Naive thymus-derived CD4-positive, alpha-beta T cell (primary cell): ENCODE measurements at regions of chr7 and their contacts with region 1.

Region 1: GRCh38 chr7:149028346-149029109 is at the start of gene PDIA4:
- DNase-seq: peak; percentile 97 to 100 (median 99)
- ATAC-seq: peak; percentile 92
- H3K4me3 ChIP-seq: peak within 1 kb of the TSS; percentile 65
- H3K4me3 Mint-ChIP-seq: peak within 1 kb of the TSS; percentile 82 to 95 (median 92)
- H3K27ac ChIP-seq: peak within 1 kb of the TSS; percentile 89
- H3K27ac Mint-ChIP-seq: peak within 1 kb of the TSS; percentile 89 to 96 (median 93)
- H3K4me1 ChIP-seq: peaks cover 16 to 17% of the 10 kb centered on the region in 2 donors
- H3K4me1 Mint-ChIP-seq: peaks cover 27 to 48% (median 41%) of the 10 kb centered on the region in 7 donors
- H3K27me3 ChIP-seq: no peaks in the 10 kb centered on the region
- H3K27me3 Mint-ChIP-seq: peaks cover 0 to 4% (median 0%) of the 10 kb centered on the region in 5 donors
- total RNA-seq, gene PDIA4: 38.2 to 157 (median 73.7) TPM

Region 2: GRCh38 chr7:148698397-148699023 is 330.0 kb before region 1 on chr7 and contains the start of gene CUL1:
- CTCF ChIA-PET with region 1: no interaction called
- POLR2A ChIA-PET with region 1: interaction called, 5 read pairs
- intact Hi-C with region 1: loop called (anchors 1 kb)
- DNase-seq: peak; percentile 74 to 85 (median 81)
- ATAC-seq: peak; percentile 89
- H3K4me3 ChIP-seq: peak within 1 kb of the TSS; percentile 80
- H3K4me3 Mint-ChIP-seq: peak within 1 kb of the TSS; percentile 85 to 99 (median 93)
- H3K27ac ChIP-seq: peak within 1 kb of the TSS; percentile 93
- H3K27ac Mint-ChIP-seq: peak within 1 kb of the TSS; percentile 87 to 99 (median 93)
- H3K4me1 ChIP-seq: peaks cover 27 to 29% of the 10 kb centered on the region in 2 donors
- H3K4me1 Mint-ChIP-seq: peaks cover 41 to 53% (median 52%) of the 10 kb centered on the region in 7 donors
- H3K27me3 ChIP-seq: no peaks in the 10 kb centered on the region
- H3K27me3 Mint-ChIP-seq: no peaks in the 10 kb centered on the region
- total RNA-seq, gene CUL1: 39.0 to 68.7 (median 53.6) TPM

Region 3: GRCh38 chr7:148987010-148987750 is 41.3 kb before region 1 on chr7:
- CTCF ChIA-PET with region 1: interaction called, 7 read pairs
- POLR2A ChIA-PET with region 1: interaction called, 6 read pairs
- intact Hi-C with region 1: loop called (anchors 1 kb)
- DNase-seq: peak; percentile 43 to 91 (median 88)
- ATAC-seq: peak; percentile 87
- H3K4me3 ChIP-seq: peak overlapping the region; percentile 97
- H3K4me3 Mint-ChIP-seq: peak overlapping the region; percentile 92 to 99 (median 98)
- H3K27ac ChIP-seq: peak overlapping the region; percentile 85
- H3K27ac Mint-ChIP-seq: peak overlapping the region; percentile 90 to 97 (median 96)
- H3K4me1 ChIP-seq: peaks cover 26% of the 10 kb centered on the region in 2 donors
- H3K4me1 Mint-ChIP-seq: peaks cover 26 to 53% (median 48%) of the 10 kb centered on the region in 7 donors
- H3K27me3 ChIP-seq: no peaks in the 10 kb centered on the region
- H3K27me3 Mint-ChIP-seq: peaks cover 0 to 27% (median 0%) of the 10 kb centered on the region in 5 donors

Region 4: DNA sequence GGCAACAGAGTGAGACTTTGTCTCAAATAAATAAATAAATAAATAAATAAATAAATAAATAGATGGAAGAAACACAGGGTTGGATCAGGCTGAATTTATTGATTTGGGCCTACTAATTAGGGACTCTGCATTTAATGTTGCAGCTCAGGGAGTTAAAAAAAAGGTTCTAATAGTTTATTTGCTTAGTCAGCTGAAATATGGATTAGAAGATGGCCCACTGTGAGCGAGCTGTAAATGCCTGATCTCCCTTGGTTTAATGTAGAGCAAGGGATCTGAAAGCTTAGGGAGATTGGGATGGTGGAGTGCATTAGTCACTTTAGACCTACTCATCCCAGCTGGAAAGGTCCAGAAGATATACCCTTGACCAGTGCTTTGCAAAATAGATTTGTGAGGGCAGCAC is 24.9 kb after region 1 on chr7:
- CTCF ChIA-PET with region 1: no interaction called
- POLR2A ChIA-PET with region 1: no interaction called
- intact Hi-C with region 1: no loop called
- DNase-seq: no peak
- ATAC-seq: no peak
- H3K4me3 ChIP-seq: no peak overlapping the region
- H3K4me3 Mint-ChIP-seq: no peak overlapping the region
- H3K27ac ChIP-seq: no peak overlapping the region
- H3K27ac Mint-ChIP-seq: no peak overlapping the region
- H3K4me1 ChIP-seq: no peaks in the 10 kb centered on the region
- H3K4me1 Mint-ChIP-seq: peaks cover 0 to 2% (median 0%) of the 10 kb centered on the region in 7 donors
- H3K27me3 ChIP-seq: no peaks in the 10 kb centered on the region
- H3K27me3 Mint-ChIP-seq: peaks cover 0 to 6% (median 0%) of the 10 kb centered on the region in 5 donors

Region 5: DNA sequence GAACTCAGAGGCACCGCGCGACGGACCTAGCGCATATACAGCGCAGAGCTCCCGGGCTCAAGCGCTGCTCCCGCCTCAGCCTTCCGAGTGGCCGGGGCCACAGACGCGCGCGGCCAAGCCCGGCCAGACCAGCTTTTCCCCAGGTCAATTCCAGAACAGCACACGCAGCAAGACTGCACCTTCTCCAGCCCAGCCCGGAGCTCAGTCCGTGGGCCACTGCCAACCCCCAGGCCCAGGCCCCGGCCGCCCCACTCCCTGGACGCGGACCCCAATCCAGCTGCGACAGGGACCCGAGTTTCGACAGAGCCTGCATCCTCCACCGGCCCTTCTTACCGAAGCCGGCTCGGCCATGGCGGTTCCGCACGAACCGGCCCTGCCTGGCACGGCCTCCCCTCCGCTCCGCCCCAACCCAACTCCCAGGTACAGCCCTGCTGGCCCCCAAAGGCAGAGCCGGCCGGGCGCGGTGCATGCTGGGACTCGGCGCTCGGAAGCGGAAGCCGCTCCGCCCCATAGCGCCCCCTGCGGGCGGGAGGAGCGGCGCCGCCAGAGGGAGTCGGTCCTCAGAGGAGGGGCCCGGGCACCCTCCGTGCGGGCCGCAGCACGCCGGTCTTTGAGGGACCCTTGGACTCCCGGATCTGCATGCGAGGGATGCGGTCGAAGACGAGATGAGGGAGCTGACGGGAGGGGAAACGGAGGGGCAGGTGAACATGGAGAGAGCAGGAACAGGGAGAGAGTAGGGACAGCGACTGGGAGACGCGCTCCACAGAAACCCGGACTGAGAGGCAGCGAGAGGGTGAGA is 97.5 kb after region 1 on chr7 and contains the start of gene ZNF425:
- CTCF ChIA-PET with region 1: no interaction called
- POLR2A ChIA-PET with region 1: interaction called, 3 read pairs
- intact Hi-C with region 1: loop called (anchors 1 kb)
- DNase-seq: peak; percentile 87 to 98 (median 92)
- ATAC-seq: peak; percentile 98
- H3K4me3 ChIP-seq: peak within 1 kb of the TSS; percentile 99
- H3K4me3 Mint-ChIP-seq: peak within 1 kb of the TSS; percentile 91 to 100 (median 100)
- H3K27ac ChIP-seq: peak within 1 kb of the TSS; percentile 91
- H3K27ac Mint-ChIP-seq: peak within 1 kb of the TSS; percentile 90 to 100 (median 98)
- H3K4me1 ChIP-seq: no peaks in the 10 kb centered on the region
- H3K4me1 Mint-ChIP-seq: peaks cover 19 to 28% (median 22%) of the 10 kb centered on the region in 7 donors
- H3K27me3 ChIP-seq: no peaks in the 10 kb centered on the region
- H3K27me3 Mint-ChIP-seq: no peaks in the 10 kb centered on the region
- total RNA-seq, gene ZNF425: 0.61 to 4.9 (median 1.0) TPM

Region 6: DNA sequence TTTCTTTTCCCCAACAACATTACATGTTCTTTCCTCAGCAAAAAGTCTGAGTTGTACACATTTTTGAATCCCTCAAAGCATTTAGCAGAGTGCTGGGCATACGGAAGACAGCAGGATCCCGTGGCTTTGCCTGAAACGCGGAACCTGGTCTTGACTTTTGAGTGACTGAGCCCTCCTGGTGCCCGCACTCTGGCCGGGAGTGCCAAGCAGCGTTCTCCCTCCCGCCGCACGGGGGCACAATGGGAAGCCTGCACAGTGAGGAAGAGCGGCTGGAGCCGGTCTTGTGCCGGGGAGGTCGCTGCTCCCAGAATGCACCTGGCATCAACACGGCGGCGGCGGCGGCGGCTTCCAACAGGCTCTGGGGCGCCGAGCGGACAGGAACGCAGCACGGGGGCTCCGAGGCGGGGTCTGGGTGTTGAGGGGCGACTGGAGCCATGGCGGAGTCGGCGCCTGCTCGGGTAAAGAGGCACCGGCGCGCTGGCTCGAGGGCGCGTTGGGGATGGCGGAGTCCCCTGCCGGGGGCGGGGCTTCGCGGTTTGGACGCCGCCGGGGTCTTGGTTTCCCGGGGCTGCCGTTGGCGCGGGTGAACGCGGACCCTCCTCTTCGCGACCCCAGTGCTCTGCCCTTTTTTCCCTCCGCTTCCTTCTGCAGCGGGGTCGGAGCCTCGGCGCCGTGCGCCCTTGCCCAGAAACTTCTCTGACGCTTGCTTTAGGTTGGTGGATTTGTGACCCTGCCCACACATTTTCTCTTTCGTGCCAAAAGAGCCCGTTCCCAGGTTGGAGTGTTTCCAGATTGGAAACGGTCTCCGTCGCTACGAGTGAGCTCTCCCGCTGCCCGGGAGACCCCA is 211.0 kb after region 1 on chr7 and contains the start of gene ZNF212:
- CTCF ChIA-PET with region 1: interaction called, 3 read pairs
- POLR2A ChIA-PET with region 1: no interaction called
- intact Hi-C with region 1: loop called in 1 of 2 experiments (anchors 1 kb)
- DNase-seq: peak; percentile 75 to 89 (median 84)
- ATAC-seq: peak; percentile 100
- H3K4me3 ChIP-seq: peak within 1 kb of the TSS; percentile 90
- H3K4me3 Mint-ChIP-seq: peak within 1 kb of the TSS; percentile 85 to 95 (median 92)
- H3K27ac ChIP-seq: peak within 1 kb of the TSS; percentile 76
- H3K27ac Mint-ChIP-seq: peak within 1 kb of the TSS; percentile 71 to 89 (median 87)
- H3K4me1 ChIP-seq: peaks cover 14 to 16% of the 10 kb centered on the region in 2 donors
- H3K4me1 Mint-ChIP-seq: peaks cover 23 to 43% (median 33%) of the 10 kb centered on the region in 7 donors
- H3K27me3 ChIP-seq: no peaks in the 10 kb centered on the region
- H3K27me3 Mint-ChIP-seq: peaks cover 0 to 6% (median 0%) of the 10 kb centered on the region in 5 donors
- total RNA-seq, gene ZNF212: 10.4 to 20.6 (median 13.3) TPM

Region 7: GRCh38 chr7:149398195-149398820 is 369.8 kb after region 1 on chr7:
- CTCF ChIA-PET with region 1: no interaction called
- POLR2A ChIA-PET with region 1: no interaction called
- intact Hi-C with region 1: no loop called
- DNase-seq: no peak
- ATAC-seq: no peak
- H3K4me3 ChIP-seq: no peak overlapping the region
- H3K4me3 Mint-ChIP-seq: no peak overlapping the region
- H3K27ac ChIP-seq: no peak overlapping the region
- H3K27ac Mint-ChIP-seq: no peak overlapping the region
- H3K4me1 ChIP-seq: no peaks in the 10 kb centered on the region
- H3K4me1 Mint-ChIP-seq: peaks cover 0 to 3% (median 0%) of the 10 kb centered on the region in 7 donors
- H3K27me3 ChIP-seq: no peaks in the 10 kb centered on the region
- H3K27me3 Mint-ChIP-seq: peaks cover 27 to 43% (median 37%) of the 10 kb centered on the region in 5 donors

Region 8: DNA sequence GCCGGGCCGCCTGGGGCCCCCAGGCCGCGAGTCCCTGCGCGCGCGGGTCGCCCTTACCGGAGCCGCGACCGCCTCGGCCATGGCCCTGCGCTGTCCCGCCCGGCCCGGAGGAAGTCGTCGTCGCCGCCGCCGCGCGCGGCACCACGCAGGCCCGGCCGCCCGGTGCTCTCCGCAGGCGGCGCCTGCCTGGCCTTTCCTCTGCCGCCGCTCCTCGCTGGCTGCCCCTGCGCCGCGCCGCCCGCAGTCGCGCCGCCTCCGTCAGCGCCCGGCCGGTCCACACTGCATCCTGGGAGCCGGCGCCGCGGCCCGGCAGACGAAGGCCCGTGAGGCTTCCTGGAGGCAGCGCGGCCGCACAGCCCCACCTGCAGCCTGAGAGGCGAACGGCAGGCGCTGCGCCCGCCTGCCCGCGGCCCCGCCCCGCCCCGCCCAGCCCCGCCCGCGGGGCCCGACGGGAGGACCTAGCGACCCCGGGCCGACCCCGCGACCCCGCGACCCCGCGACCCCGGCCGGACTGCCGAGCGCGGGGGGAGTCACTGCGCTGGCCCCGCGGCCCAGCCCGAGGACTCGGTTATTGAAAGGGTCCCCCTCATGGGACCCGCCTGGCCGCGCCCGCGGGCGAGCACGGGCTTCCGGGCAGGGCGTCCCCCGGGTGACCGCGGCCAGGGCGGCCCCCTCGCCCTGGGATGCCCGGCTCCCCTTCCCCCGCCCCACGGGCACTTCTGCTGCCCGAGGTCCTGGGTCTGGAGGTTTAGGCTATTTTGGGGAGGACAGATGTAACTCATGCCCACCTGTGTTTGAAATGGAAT is 469.1 kb after region 1 on chr7 and contains the start of gene ZNF746:
- CTCF ChIA-PET with region 1: no interaction called
- POLR2A ChIA-PET with region 1: no interaction called
- intact Hi-C with region 1: loop called (anchors 2 kb)
- DNase-seq: peak; percentile 57 to 85 (median 76)
- ATAC-seq: peak; percentile 96
- H3K4me3 ChIP-seq: peak within 1 kb of the TSS; percentile 67
- H3K4me3 Mint-ChIP-seq: peak within 1 kb of the TSS; percentile 92 to 99 (median 96)
- H3K27ac ChIP-seq: peak within 1 kb of the TSS; percentile 82
- H3K27ac Mint-ChIP-seq: peak within 1 kb of the TSS; percentile 84 to 97 (median 95)
- H3K4me1 ChIP-seq: peaks cover 19 to 27% of the 10 kb centered on the region in 2 donors
- H3K4me1 Mint-ChIP-seq: peaks cover 21 to 46% (median 30%) of the 10 kb centered on the region in 7 donors
- H3K27me3 ChIP-seq: no peaks in the 10 kb centered on the region
- H3K27me3 Mint-ChIP-seq: peaks cover 0 to 3% (median 0%) of the 10 kb centered on the region in 5 donors
- total RNA-seq, gene ZNF746: 23.6 to 32.0 (median 24.4) TPM

Region 9: GRCh38 chr7:149861446-149862045 is 833.0 kb after region 1 on chr7:
- CTCF ChIA-PET with region 1: no interaction called
- POLR2A ChIA-PET with region 1: no interaction called
- intact Hi-C with region 1: loop called in 1 of 2 experiments (anchors 5 kb)
- DNase-seq: no peak
- ATAC-seq: no peak
- H3K4me3 ChIP-seq: no peak overlapping the region
- H3K4me3 Mint-ChIP-seq: peak overlapping the region in 1 of 10 donors; percentile 6
- H3K27ac ChIP-seq: no peak overlapping the region
- H3K27ac Mint-ChIP-seq: peak overlapping the region in 6 of 9 donors; percentile 10 to 83 (median 50)
- H3K4me1 ChIP-seq: peaks cover 29 to 69% of the 10 kb centered on the region in 2 donors
- H3K4me1 Mint-ChIP-seq: peaks cover 36 to 93% (median 83%) of the 10 kb centered on the region in 7 donors
- H3K27me3 ChIP-seq: no peaks in the 10 kb centered on the region
- H3K27me3 Mint-ChIP-seq: no peaks in the 10 kb centered on the region